GM10248 (cell line): ENCODE measurements at regions of chr11 and their contacts with region 1.

Region 1: DNA sequence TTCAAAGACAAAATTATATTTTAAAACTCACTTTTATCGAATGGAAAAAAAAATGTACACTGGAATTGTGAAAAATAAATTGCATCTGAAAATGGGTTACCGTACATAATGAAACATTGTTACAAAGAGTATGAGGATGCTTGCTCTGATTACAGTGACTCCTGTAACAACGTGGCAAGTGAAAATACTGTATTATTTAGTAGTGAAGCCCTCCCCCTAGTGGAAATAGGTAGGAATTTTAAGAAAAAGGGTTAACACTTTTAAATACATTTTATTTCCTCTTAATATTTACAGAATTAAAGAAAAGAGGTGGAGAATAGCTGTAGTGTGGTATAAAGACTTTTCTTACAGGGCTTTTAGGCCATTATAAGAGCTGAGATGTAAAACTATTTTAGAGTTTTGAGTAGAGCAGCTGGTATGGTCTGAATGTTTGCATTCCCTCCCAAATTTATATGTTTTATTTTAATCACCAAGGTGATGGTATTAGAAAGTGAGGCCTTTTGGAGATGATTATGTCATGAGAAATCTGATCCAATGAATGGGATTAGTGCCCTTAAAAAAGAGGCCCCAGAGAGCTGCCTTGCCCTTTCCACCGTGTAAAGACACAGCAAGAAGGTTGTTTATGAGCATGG is 25.2 kb downstream of the FAM76B start:
- DNase-seq: peak; percentile 48
- CTCF ChIP-seq: peak; percentile 31

Region 2: GRCh38 chr11:95750101-95750500 is 14.3 kb before region 1 on chr11:
- CTCF ChIA-PET with region 1: interaction called, 12 read pairs
- POLR2A ChIA-PET with region 1: no interaction called
- DNase-seq: no peak
- CTCF ChIP-seq: no peak

Region 3: GRCh38 chr11:95805869-95806268 is 41.5 kb after region 1 on chr11:
- CTCF ChIA-PET with region 1: no interaction called
- POLR2A ChIA-PET with region 1: no interaction called
- DNase-seq: no peak
- CTCF ChIP-seq: no peak